Calu3 (cell line): ENCODE measurements at regions of chr6 and their contacts with region 1.

Region 1: DNA sequence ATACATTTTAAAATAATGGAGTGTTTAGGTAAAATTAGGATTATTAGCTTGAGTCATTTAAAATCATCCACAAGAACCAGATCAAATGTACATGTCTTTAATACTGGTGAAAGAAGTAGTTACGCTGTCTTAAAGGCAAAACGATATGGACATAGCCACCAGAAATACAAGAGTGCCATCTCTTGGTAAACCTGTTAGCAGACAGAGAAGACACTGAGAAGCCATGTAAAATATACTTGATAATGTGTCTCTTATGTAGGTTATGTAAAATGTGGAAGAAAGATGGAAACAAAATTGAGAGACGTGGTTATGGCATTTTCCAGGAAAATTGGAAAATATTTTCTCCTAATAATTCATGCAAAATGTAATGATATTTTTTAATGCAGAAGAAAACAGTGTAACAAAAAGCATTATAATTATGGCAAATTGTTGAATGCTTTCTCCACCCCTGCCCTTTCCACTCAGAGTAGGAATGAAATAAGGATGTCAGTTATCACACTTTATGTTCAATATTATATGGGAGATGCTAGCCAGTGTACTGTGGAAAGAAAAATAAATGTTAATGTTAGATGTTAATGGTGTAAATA is 12.2 kb upstream of the SLC17A2 start:
- DNase-seq: peak; percentile 35
- H3K4me3 Mint-ChIP-seq: no peak overlapping the region
- H3K27ac Mint-ChIP-seq: no peak overlapping the region
- H3K4me1 Mint-ChIP-seq: no peaks in the 10 kb centered on the region
- H3K27me3 Mint-ChIP-seq: no peaks in the 10 kb centered on the region
- CTCF ChIP-seq: peak; percentile 61

Region 2: DNA sequence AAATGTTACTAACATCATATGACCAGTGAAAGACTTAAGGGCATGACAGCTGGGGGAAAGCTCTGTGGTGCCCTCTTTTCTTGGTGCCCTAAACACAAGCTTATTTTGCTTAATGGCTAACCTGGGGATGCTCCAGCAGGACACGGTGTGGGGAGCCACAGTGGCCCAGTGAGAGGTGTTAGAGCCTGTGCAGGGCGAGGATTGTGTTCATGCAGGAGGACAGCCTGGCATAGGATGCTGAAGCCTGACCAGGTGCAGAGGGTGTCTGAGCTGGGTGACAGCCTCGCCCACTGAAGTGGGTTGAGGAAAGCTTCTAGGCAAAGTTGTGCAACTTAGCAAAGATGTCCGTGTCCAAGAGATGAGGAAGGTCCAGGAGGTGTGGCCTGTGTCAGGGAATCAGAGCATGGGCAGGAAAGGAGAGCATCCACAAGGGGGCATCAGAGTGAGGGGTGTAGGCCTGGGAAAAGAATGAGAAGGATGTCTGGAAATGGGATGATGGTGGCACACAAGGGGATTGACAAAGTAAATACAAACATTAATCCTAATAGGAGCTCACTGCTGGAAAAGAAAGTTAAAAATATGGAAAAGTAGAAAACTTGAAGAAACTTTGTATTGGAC is 154.2 kb before region 1 on chr6:
- CTCF ChIA-PET with region 1: no interaction called
- intact Hi-C with region 1: loop called (anchors 1 kb)
- DNase-seq: peak; percentile 88
- H3K4me3 Mint-ChIP-seq: no peak overlapping the region
- H3K27ac Mint-ChIP-seq: no peak overlapping the region
- H3K4me1 Mint-ChIP-seq: no peaks in the 10 kb centered on the region
- H3K27me3 Mint-ChIP-seq: no peaks in the 10 kb centered on the region
- CTCF ChIP-seq: peak; percentile 84

Region 3: DNA sequence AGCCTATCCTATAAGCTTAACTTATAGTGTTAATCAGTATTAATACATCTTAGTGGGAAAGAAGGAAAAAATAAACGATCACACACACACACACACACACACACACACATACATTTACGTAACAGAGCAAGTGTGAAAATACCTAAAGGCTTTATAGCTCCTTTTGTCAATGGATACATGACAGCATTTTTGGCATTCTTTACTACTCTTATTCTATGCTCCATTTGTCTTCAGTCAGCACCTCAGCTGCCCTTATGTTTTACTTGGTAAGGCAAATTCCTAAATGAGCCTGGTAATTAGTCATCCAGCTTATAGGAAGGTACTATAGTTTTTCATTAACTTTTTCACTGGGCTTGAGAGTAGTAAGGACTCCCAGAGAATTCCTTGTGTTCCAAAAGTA is 43.5 kb before region 1 on chr6:
- CTCF ChIA-PET with region 1: no interaction called
- intact Hi-C with region 1: loop called (anchors 5 kb)
- DNase-seq: no peak
- H3K4me3 Mint-ChIP-seq: peak overlapping the region; percentile 21
- H3K27ac Mint-ChIP-seq: peak overlapping the region; percentile 63
- H3K4me1 Mint-ChIP-seq: peaks cover 30% of the 10 kb centered on the region
- H3K27me3 Mint-ChIP-seq: no peaks in the 10 kb centered on the region
- CTCF ChIP-seq: no peak